Activated CD4-positive, alpha-beta memory T cell treated with anti-CD3 and anti-CD28 coated beads for 36 hours (primary cell): ENCODE measurements at regions of chr2 and their contacts with region 1.

Region 1: GRCh38 chr2:64342195-64343099 is 111.5 kb upstream of the LGALSL start:
- DNase-seq: no peak
- H3K4me3 Mint-ChIP-seq: no peak overlapping the region
- H3K27ac Mint-ChIP-seq: no peak overlapping the region
- H3K4me1 Mint-ChIP-seq: no peaks in the 10 kb centered on the region
- H3K27me3 Mint-ChIP-seq: peaks cover 5% of the 10 kb centered on the region

Region 2: GRCh38 chr2:64391424-64391823 is 49.0 kb after region 1 on chr2:
- CTCF ChIA-PET with region 1: no interaction called
- POLR2A ChIA-PET with region 1: no interaction called
- intact Hi-C with region 1: loop called (anchors 5 kb)
- DNase-seq: no peak
- H3K4me3 Mint-ChIP-seq: no peak overlapping the region
- H3K27ac Mint-ChIP-seq: no peak overlapping the region
- H3K4me1 Mint-ChIP-seq: no peaks in the 10 kb centered on the region
- H3K27me3 Mint-ChIP-seq: peaks cover 3% of the 10 kb centered on the region

Region 3: DNA sequence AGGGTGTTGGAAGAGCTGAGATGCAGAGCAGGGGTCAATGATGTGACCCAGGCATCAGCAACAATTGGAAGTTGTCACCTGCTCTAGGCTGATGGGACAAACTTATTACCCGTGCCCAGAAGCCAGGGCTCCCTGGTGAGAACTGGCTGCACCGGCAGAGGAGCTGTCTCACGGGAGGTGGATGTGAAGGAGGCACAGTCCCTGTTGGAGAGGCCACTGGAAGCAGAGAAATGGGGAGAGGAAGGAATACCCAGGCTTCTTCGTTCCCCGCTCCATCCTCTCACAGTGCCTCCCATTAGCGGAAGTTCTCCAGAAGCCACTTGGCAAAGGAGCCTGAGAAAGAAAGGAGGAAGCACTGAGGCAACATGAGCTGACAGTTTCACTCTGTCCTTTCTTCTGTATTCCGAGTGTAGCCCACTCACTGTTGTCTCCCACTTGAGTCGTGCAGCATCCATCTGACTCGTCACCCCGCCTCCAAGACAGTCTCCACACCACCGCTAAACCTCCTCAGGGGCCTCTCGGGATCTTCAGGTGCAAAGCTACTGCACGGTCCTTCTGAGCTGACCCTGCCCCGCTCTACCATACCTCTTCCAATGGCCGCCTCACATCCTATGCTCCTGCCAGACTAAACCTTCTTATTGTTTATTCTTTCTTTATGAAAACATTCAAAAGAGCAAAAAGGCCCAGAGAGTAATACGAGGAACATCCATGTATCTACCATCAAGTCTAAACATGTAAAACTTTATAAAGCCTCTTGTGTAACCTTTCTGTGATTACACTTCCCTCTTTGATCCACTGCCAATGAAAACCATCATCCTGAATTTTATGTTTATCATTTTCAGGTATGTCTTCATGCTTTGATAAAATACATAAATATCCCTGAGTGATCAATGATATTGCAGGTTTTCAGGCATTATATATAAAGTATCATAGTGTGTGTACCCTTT is 162.6 kb after region 1 on chr2:
- CTCF ChIA-PET with region 1: no interaction called
- POLR2A ChIA-PET with region 1: no interaction called
- intact Hi-C with region 1: no loop called
- DNase-seq: no peak
- H3K4me3 Mint-ChIP-seq: no peak overlapping the region
- H3K27ac Mint-ChIP-seq: no peak overlapping the region
- H3K4me1 Mint-ChIP-seq: peaks cover 3% of the 10 kb centered on the region
- H3K27me3 Mint-ChIP-seq: peaks cover 6% of the 10 kb centered on the region